Heart left ventricle (tissue), 16 donors: ENCODE measurements at regions of chr10 and their contacts with region 1.

Region 1: DNA sequence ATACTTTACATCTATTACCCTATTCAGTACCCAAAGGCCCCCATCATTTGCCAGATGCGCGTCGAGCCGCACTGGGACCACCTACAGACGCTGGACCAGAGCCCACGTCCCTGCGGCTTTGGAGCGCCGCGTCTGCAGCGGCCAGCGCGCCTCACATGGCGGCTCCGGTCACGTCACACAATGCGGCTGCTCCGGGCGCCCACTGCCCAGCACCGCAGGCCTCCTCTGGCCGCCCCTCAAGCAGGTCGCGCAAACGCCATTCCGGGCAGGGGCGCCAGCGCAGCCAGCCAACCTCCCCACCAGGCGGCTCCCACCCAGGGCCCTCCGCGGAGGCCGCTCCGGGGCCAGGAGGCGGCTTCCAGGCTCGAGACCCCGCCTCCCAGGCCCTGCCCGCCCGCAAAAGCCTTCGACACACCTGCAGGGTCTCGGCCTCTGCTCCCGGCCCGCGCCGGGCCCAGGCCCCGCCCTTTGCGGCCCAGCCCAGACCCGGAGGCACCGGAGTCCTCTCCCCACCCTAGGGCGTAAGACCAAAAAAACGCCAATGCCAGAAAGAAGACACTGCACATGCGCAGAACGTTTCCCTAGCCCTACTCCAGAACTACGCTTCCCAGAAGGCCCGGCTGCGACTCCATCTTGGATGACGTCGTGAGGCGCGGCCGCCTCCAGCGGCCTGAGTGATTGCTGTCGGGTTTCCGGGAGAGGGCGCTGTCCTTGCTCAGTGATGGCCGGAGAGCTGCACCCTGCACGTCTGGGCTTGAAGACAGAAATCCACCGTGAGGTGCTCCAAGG is at the start of gene ZNF25:
- DNase-seq: peak; percentile 98 to 99 (median 99)
- ATAC-seq: peak; percentile 98 to 99 (median 99)
- H3K4me3 ChIP-seq: peak within 1 kb of the TSS; percentile 79 to 99 (median 90)
- H3K27ac ChIP-seq: peak within 1 kb of the TSS; percentile 94 to 100 (median 98)
- H3K4me1 ChIP-seq: peaks cover 0 to 17% (median 11%) of the 10 kb centered on the region in 12 donors
- H3K27me3 ChIP-seq: no peaks in the 10 kb centered on the region
- CTCF ChIP-seq: peak; percentile 79 to 94 (median 86)
- POLR2A ChIP-seq: peak in 1 of 2 donors; percentile 86
- total RNA-seq, gene ZNF25: 10.7 to 20.2 (median 17.0) TPM

Region 2: GRCh38 chr10:37774351-37774750 is 201.9 kb before region 1 on chr10:
- intact Hi-C with region 1: no loop called
- DNase-seq: no peak
- ATAC-seq: no peak
- H3K4me3 ChIP-seq: no peak overlapping the region
- H3K27ac ChIP-seq: no peak overlapping the region
- H3K4me1 ChIP-seq: no peaks in the 10 kb centered on the region
- H3K27me3 ChIP-seq: no peaks in the 10 kb centered on the region
- CTCF ChIP-seq: no peak
- POLR2A ChIP-seq: no peak

Region 3: GRCh38 chr10:37857287-37858211 is 118.7 kb before region 1 on chr10 and contains the start of gene ZNF248:
- intact Hi-C with region 1: loop called in 7 of 10 experiments (anchors 1 to 10 kb)
- DNase-seq: peak; percentile 96 to 98 (median 97)
- ATAC-seq: peak; percentile 98 to 99 (median 99)
- H3K4me3 ChIP-seq: peak within 1 kb of the TSS; percentile 57 to 99 (median 78)
- H3K27ac ChIP-seq: peak within 1 kb of the TSS; percentile 97 to 100 (median 99)
- H3K4me1 ChIP-seq: peaks cover 0 to 34% (median 24%) of the 10 kb centered on the region in 12 donors
- H3K27me3 ChIP-seq: no peaks in the 10 kb centered on the region
- CTCF ChIP-seq: peak in 3 of 12 donors; percentile 7 to 32 (median 14)
- POLR2A ChIP-seq: peak; percentile 54 to 97
- total RNA-seq, gene ZNF248: 6.3 to 14.7 (median 9.1) TPM

Region 4: GRCh38 chr10:38010119-38010903 is 34.0 kb after region 1 on chr10 and contains the start of gene ZNF33A:
- intact Hi-C with region 1: loop called in 6 of 10 experiments (anchors 1 to 2 kb)
- DNase-seq: peak; percentile 91 to 95 (median 92)
- ATAC-seq: peak; percentile 96 to 97 (median 96)
- H3K4me3 ChIP-seq: peak within 1 kb of the TSS; percentile 51 to 94 (median 71)
- H3K27ac ChIP-seq: peak within 1 kb of the TSS; percentile 92 to 99 (median 98)
- H3K4me1 ChIP-seq: peaks cover 0 to 19% (median 7%) of the 10 kb centered on the region in 12 donors
- H3K27me3 ChIP-seq: no peaks in the 10 kb centered on the region
- CTCF ChIP-seq: no peak
- POLR2A ChIP-seq: peak in 1 of 2 donors; percentile 67
- total RNA-seq, gene ZNF33A: 15.6 to 29.7 (median 19.0) TPM

Region 5: DNA sequence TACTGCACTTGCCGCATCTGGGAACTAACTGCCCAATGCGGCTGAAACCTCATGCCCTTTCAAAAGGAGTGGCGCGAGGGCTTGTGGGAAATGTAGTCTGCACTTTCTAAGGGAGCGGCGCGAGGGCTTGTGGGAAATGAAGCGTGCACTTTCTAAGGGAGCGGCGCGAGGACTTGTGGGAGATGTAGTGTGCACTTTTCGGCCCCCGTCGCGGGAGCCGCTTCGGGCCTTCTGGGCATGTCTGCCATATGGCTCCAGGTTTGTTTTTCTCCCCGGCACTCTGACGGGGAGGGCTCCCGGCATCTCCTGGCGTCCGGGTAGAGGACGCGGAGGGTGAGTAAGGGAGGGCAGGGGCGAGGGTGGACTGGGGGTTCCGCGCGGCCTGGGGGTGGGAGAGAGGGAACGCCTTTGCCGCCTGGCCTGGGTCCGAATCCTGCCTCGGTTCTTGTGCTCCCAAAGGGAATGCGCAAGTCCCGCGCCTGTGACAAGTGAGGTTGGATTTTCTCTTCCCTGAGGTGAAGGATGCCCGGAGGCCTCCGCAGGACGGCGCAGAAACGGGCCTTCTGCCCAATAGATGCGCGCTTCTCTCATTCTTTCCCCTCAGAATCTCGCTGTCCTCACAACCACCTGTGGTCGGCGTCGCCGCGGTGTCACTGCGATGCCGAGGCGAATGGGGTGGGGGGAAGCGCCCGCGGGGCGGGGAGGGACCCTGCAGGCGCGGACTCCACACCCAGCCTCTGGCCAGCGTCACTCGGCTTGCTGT is 118.1 kb after region 1 on chr10 and contains the start of gene ZNF37A:
- intact Hi-C with region 1: loop called in 8 of 10 experiments (anchors 1 to 10 kb)
- DNase-seq: peak; percentile 92 to 97 (median 94)
- ATAC-seq: peak; percentile 99 to 100 (median 99)
- H3K4me3 ChIP-seq: peak within 1 kb of the TSS; percentile 43 to 97 (median 86)
- H3K27ac ChIP-seq: peak within 1 kb of the TSS; percentile 53 to 91 (median 82)
- H3K4me1 ChIP-seq: peaks cover 0 to 14% (median 8%) of the 10 kb centered on the region in 12 donors
- H3K27me3 ChIP-seq: no peaks in the 10 kb centered on the region
- CTCF ChIP-seq: peak in 1 of 12 donors; percentile 8
- POLR2A ChIP-seq: peak in 1 of 2 donors; percentile 89
- total RNA-seq, gene ZNF37A: 5.6 to 10.0 (median 7.8) TPM